Dorsolateral prefrontal cortex (tissue), 120 donors: ENCODE measurements at regions of chrX and their contacts with region 1.

Region 1: GRCh38 chrX:154019633-154020528 is at the start of gene IRAK1:
- DNase-seq: peak in 4 of 10 donors; percentile 31 to 71 (median 40)
- H3K4me3 ChIP-seq: peak within 1 kb of the TSS; percentile 34 to 71 (median 58)
- H3K27ac ChIP-seq: peak within 1 kb of the TSS in 58 of 59 donors; percentile 7 to 92 (median 82)
- H3K27me3 ChIP-seq: peaks cover 0 to 63% (median 10%) of the 10 kb centered on the region in 45 donors
- CTCF ChIP-seq: peak in 3 of 56 donors; percentile 10 to 35 (median 19)
- total RNA-seq, gene IRAK1: 27.2 to 130 (median 49.0) TPM

Region 2: DNA sequence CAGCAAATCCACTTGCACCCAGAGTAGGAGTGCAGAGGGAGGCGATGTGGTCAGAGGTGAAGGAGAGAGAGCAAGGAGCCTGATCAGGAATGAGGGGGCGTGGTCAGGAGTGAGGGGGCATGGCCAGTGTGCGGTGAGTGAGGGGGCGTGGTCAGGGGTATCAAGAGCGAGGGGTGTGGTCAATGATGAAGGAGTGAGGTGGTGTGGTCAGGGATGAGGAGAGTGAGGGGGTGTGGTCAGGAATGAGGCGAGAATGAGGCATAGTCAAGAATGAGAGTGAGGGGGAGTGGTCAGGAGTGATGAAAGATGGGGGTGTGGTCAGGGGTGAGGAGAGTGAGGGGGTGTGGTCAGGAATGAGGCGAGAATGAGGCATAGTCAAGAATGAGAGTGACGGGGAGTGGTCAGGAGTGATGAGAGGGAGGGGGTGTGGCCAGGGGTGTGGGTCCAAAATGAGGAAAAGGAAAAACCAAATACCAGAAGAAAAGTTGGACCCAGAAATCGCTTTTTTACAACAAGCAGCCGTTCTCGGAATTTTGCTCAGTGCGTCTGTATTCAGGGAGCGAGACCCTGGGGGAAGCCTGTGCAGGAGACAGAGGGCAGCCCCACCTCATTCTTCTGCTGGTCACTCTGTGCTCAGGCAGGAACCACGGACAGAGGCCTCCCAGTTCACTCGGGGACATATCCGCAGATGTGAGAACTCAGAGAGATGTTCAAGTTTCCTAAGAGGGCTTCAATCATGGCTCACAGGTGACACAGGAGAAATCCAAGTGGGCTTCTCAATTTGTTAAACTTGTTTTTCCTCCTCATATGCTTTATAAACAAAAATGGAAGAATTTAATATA is 793.3 kb before region 1 on chrX:
- intact Hi-C with region 1: no loop called
- DNase-seq: no peak
- H3K4me3 ChIP-seq: no peak overlapping the region
- H3K27ac ChIP-seq: no peak overlapping the region
- H3K27me3 ChIP-seq: peaks cover 0 to 95% (median 37%) of the 10 kb centered on the region in 45 donors
- CTCF ChIP-seq: no peak

Region 3: GRCh38 chrX:153924149-153924861 is 95.6 kb before region 1 on chrX:
- intact Hi-C with region 1: no loop called
- DNase-seq: peak in 4 of 10 donors; percentile 46 to 64 (median 54)
- H3K4me3 ChIP-seq: peak overlapping the region in 14 of 59 donors; percentile 3 to 74 (median 21)
- H3K27ac ChIP-seq: peak overlapping the region in 23 of 59 donors; percentile 3 to 64 (median 32)
- H3K27me3 ChIP-seq: peaks cover 0 to 86% (median 14%) of the 10 kb centered on the region in 45 donors
- CTCF ChIP-seq: peak in 37 of 56 donors; percentile 12 to 52 (median 28)

Region 4: GRCh38 chrX:154051201-154051810 is 31.4 kb after region 1 on chrX:
- intact Hi-C with region 1: loop called in 1 of 2 experiments (anchors 5 kb)
- DNase-seq: peak in 8 of 10 donors; percentile 35 to 82 (median 66)
- H3K4me3 ChIP-seq: no peak overlapping the region
- H3K27ac ChIP-seq: peak overlapping the region in 4 of 59 donors; percentile 2 to 51 (median 15)
- H3K27me3 ChIP-seq: peaks cover 0 to 63% (median 6%) of the 10 kb centered on the region in 45 donors
- CTCF ChIP-seq: peak; percentile 18 to 81 (median 70)